HCT116 (cell line): ENCODE measurements at regions of chr1 and their contacts with region 1.

Region 1: GRCh38 chr1:181936768-181937581 is 124.5 kb downstream of the ZNF648 start:
- DNase-seq: peak; percentile 77
- ATAC-seq: peak; percentile 97
- H3K4me3 ChIP-seq: no peak overlapping the region; a peak in 1 of 4 replicates
- H3K27ac ChIP-seq: no peak overlapping the region
- H3K4me1 ChIP-seq: peaks cover 3% of the 10 kb centered on the region in 2 experiments; a peak in 1 of 4 replicates
- H3K27me3 ChIP-seq: peaks cover 12% of the 10 kb centered on the region
- CTCF ChIP-seq: peak; percentile 60 to 97 (median 81)
- POLR2A ChIP-seq: no peak
- RAD21 ChIP-seq: peak; percentile 81

Region 2: GRCh38 chr1:181479137-181479745 is 457.7 kb before region 1 on chr1:
- CTCF ChIA-PET with region 1: interaction called, 58 read pairs
- POLR2A ChIA-PET with region 1: no interaction called
- RAD21 ChIA-PET with region 1: interaction called, 4 to 15 read pairs
- intact Hi-C with region 1: loop called (anchors 1 kb)
- DNase-seq: peak; percentile 59
- ATAC-seq: peak; percentile 95
- H3K4me3 ChIP-seq: no peak overlapping the region
- H3K27ac ChIP-seq: no peak overlapping the region
- H3K4me1 ChIP-seq: no peaks in the 10 kb centered on the region
- H3K27me3 ChIP-seq: peaks cover 40% of the 10 kb centered on the region
- CTCF ChIP-seq: peak; percentile 81 to 89 (median 84)
- POLR2A ChIP-seq: no peak
- RAD21 ChIP-seq: peak; percentile 87

Region 3: GRCh38 chr1:181676269-181676668 is 260.7 kb before region 1 on chr1:
- CTCF ChIA-PET with region 1: interaction called, 5 read pairs
- POLR2A ChIA-PET with region 1: no interaction called
- RAD21 ChIA-PET with region 1: no interaction called
- intact Hi-C with region 1: loop called (anchors 5 kb)
- DNase-seq: peak; percentile 13
- ATAC-seq: peak; percentile 87
- H3K4me3 ChIP-seq: no peak overlapping the region
- H3K27ac ChIP-seq: no peak overlapping the region
- H3K4me1 ChIP-seq: no peaks in the 10 kb centered on the region
- H3K27me3 ChIP-seq: peaks cover 29% of the 10 kb centered on the region; the same call in 1 of the 2 replicates
- CTCF ChIP-seq: peak; percentile 20 to 54 (median 45); a peak in 4 of 6 replicates
- POLR2A ChIP-seq: no peak
- RAD21 ChIP-seq: peak; percentile 60

Region 4: GRCh38 chr1:181872562-181873144 is 64.3 kb before region 1 on chr1:
- CTCF ChIA-PET with region 1: no interaction called
- POLR2A ChIA-PET with region 1: no interaction called
- RAD21 ChIA-PET with region 1: no interaction called
- intact Hi-C with region 1: no loop called
- DNase-seq: no peak
- ATAC-seq: no peak
- H3K4me3 ChIP-seq: no peak overlapping the region
- H3K27ac ChIP-seq: no peak overlapping the region
- H3K4me1 ChIP-seq: no peaks in the 10 kb centered on the region
- H3K27me3 ChIP-seq: no peaks in the 10 kb centered on the region
- CTCF ChIP-seq: no peak
- POLR2A ChIP-seq: no peak
- RAD21 ChIP-seq: no peak

Region 5: DNA sequence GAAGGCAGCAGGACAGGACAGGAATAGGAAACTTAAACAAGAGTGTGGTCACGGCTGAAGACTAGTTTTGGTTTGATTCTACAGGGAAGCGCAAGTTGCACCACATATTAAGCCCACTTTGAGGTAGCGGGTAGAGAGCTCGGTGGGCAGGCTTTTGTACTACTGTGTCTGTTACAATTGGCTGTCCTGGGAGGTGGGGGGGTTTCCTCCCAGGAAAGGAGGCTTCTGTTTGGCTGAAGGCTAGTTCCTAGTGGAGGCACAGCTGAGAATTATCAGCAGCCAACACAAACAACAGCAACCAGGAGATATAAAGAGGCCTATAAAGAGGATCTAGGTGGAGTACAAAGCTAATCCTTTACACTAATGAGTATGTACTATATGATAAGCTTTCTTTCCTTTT is 61.9 kb after region 1 on chr1:
- CTCF ChIA-PET with region 1: no interaction called
- POLR2A ChIA-PET with region 1: no interaction called
- RAD21 ChIA-PET with region 1: no interaction called
- intact Hi-C with region 1: no loop called
- DNase-seq: no peak
- ATAC-seq: no peak
- H3K4me3 ChIP-seq: no peak overlapping the region
- H3K27ac ChIP-seq: no peak overlapping the region
- H3K4me1 ChIP-seq: no peaks in the 10 kb centered on the region
- H3K27me3 ChIP-seq: peaks cover 26% of the 10 kb centered on the region
- CTCF ChIP-seq: no peak
- POLR2A ChIP-seq: no peak
- RAD21 ChIP-seq: no peak

Region 6: GRCh38 chr1:182029379-182030331 is 92.7 kb after region 1 on chr1:
- CTCF ChIA-PET with region 1: interaction called, 4 read pairs
- POLR2A ChIA-PET with region 1: no interaction called
- RAD21 ChIA-PET with region 1: no interaction called
- intact Hi-C with region 1: loop called (anchors 1 kb)
- DNase-seq: peak; percentile 93
- ATAC-seq: peak; percentile 90
- H3K4me3 ChIP-seq: peak overlapping the region; percentile 67 to 70
- H3K27ac ChIP-seq: peak overlapping the region; percentile 77
- H3K4me1 ChIP-seq: peaks cover 8 to 15% of the 10 kb centered on the region in 2 experiments; a peak in 3 of 4 replicates
- H3K27me3 ChIP-seq: no peaks in the 10 kb centered on the region
- CTCF ChIP-seq: peak in 2 of 3 experiments; percentile 13 to 31; a peak in 2 of 6 replicates
- POLR2A ChIP-seq: peak; percentile 77
- RAD21 ChIP-seq: no peak